ENCODE measurements at regions of chr6 and their contacts with region 1.

Region 1: DNA sequence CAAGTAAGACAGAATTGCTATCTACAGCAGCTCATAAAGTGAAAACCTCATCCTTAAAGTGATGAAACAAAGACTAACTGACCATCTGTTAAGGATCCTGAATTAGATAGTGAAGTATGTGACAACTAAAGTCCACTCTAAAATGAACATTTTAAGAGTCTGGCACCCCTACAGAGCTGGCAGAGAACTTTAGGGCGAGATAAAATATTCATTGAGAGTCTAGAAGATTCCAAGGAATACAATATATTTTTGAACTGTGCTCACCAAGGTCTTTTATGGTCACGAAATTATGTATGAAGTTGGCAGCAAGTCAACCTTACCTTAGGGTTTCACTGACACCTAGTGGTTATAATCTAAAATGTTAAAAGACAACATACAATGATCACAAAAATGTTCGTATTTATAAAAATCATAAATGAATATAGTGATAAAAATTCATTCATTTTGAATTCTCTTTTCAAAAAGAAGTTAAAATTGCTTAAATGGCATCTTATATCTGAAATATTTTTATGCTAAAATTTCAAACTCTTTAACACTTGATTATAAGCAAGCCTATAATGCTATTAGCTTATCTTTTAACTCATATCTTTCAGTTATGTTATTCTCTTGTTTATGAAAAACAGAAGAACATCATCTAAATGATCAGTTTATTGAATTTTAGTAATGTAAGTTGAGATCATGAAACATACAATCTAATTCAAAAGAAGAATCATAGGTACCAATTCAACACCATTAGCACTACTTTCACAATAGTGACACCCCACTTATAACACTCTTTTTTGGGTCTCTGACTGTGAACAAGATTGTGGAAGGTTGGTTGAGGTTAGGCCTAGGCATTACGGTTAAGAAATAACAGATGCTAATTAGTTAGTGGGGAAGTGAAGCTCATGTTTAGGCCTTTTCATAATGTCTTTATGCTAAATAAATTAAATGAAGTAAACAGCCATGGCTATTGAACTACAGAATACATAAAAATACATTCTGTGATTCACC is 27.5 kb downstream of the RSPH3 start:
- DNase-seq: peak in 2 of 9 experiments; percentile 70 to 78
- ATAC-seq: peak; percentile 63
- H3K4me3 ChIP-seq: no peak overlapping the region
- H3K4me3 Mint-ChIP-seq: no peak overlapping the region
- H3K27ac ChIP-seq: no peak overlapping the region
- H3K27ac Mint-ChIP-seq: no peak overlapping the region
- H3K4me1 ChIP-seq: no peaks in the 10 kb centered on the region
- H3K4me1 Mint-ChIP-seq: no peaks in the 10 kb centered on the region
- H3K27me3 ChIP-seq: no peaks in the 10 kb centered on the region
- H3K27me3 Mint-ChIP-seq: no peaks in the 10 kb centered on the region
- CTCF ChIP-seq: peak; percentile 73

Region 2: GRCh38 chr6:158631678-158632537 is 340.6 kb before region 1 on chr6:
- CTCF ChIA-PET with region 1: interaction called, 3 read pairs
- POLR2A ChIA-PET with region 1: no interaction called
- intact Hi-C with region 1: loop called in 1 of 2 experiments (anchors 5 kb)
- DNase-seq: peak in 1 of 9 experiments; percentile 40
- ATAC-seq: no peak
- H3K4me3 ChIP-seq: no peak overlapping the region
- H3K4me3 Mint-ChIP-seq: no peak overlapping the region
- H3K27ac ChIP-seq: peak overlapping the region in 1 of 2 experiments; percentile 40
- H3K27ac Mint-ChIP-seq: peak overlapping the region; percentile 87
- H3K4me1 ChIP-seq: peaks cover 23% of the 10 kb centered on the region
- H3K4me1 Mint-ChIP-seq: peaks cover 55% of the 10 kb centered on the region
- H3K27me3 ChIP-seq: no peaks in the 10 kb centered on the region
- H3K27me3 Mint-ChIP-seq: no peaks in the 10 kb centered on the region
- CTCF ChIP-seq: no peak

Region 3: GRCh38 chr6:158704181-158704822 is 268.2 kb before region 1 on chr6:
- CTCF ChIA-PET with region 1: interaction called, 140 read pairs
- POLR2A ChIA-PET with region 1: interaction called, 4 read pairs
- intact Hi-C with region 1: loop called (anchors 1 kb)
- DNase-seq: peak; percentile 66 to 89 (median 77)
- ATAC-seq: peak; percentile 97
- H3K4me3 ChIP-seq: peak overlapping the region; percentile 45 to 60
- H3K4me3 Mint-ChIP-seq: peak overlapping the region; percentile 81
- H3K27ac ChIP-seq: peak overlapping the region in 1 of 2 experiments; percentile 17
- H3K27ac Mint-ChIP-seq: peak overlapping the region; percentile 79
- H3K4me1 ChIP-seq: peaks cover 8% of the 10 kb centered on the region
- H3K4me1 Mint-ChIP-seq: peaks cover 9% of the 10 kb centered on the region
- H3K27me3 ChIP-seq: no peaks in the 10 kb centered on the region
- H3K27me3 Mint-ChIP-seq: no peaks in the 10 kb centered on the region
- CTCF ChIP-seq: peak; percentile 98

Region 4: GRCh38 chr6:158769771-158770432 is 202.6 kb before region 1 on chr6:
- CTCF ChIA-PET with region 1: interaction called, 16 read pairs
- POLR2A ChIA-PET with region 1: no interaction called
- intact Hi-C with region 1: no loop called
- DNase-seq: peak in 1 of 9 experiments; percentile 35
- ATAC-seq: no peak
- H3K4me3 ChIP-seq: no peak overlapping the region
- H3K4me3 Mint-ChIP-seq: peak overlapping the region; percentile 9
- H3K27ac ChIP-seq: peak overlapping the region in 1 of 2 experiments; percentile 40
- H3K27ac Mint-ChIP-seq: peak overlapping the region; percentile 3
- H3K4me1 ChIP-seq: peaks cover 36% of the 10 kb centered on the region
- H3K4me1 Mint-ChIP-seq: peaks cover 45% of the 10 kb centered on the region
- H3K27me3 ChIP-seq: no peaks in the 10 kb centered on the region
- H3K27me3 Mint-ChIP-seq: no peaks in the 10 kb centered on the region
- CTCF ChIP-seq: no peak

Region 5: GRCh38 chr6:158869826-158870648 is 102.5 kb before region 1 on chr6:
- CTCF ChIA-PET with region 1: interaction called, 3 read pairs
- POLR2A ChIA-PET with region 1: no interaction called
- intact Hi-C with region 1: loop called (anchors 2 to 10 kb)
- DNase-seq: peak in 5 of 9 experiments; percentile 63 to 99 (median 94)
- ATAC-seq: peak; percentile 75
- H3K4me3 ChIP-seq: peak overlapping the region; percentile 57 to 61
- H3K4me3 Mint-ChIP-seq: peak overlapping the region; percentile 89
- H3K27ac ChIP-seq: peak overlapping the region; percentile 86 to 98
- H3K27ac Mint-ChIP-seq: peak overlapping the region; percentile 99
- H3K4me1 ChIP-seq: peaks cover 20% of the 10 kb centered on the region
- H3K4me1 Mint-ChIP-seq: peaks cover 34% of the 10 kb centered on the region
- H3K27me3 ChIP-seq: no peaks in the 10 kb centered on the region
- H3K27me3 Mint-ChIP-seq: no peaks in the 10 kb centered on the region
- CTCF ChIP-seq: no peak

Region 6: DNA sequence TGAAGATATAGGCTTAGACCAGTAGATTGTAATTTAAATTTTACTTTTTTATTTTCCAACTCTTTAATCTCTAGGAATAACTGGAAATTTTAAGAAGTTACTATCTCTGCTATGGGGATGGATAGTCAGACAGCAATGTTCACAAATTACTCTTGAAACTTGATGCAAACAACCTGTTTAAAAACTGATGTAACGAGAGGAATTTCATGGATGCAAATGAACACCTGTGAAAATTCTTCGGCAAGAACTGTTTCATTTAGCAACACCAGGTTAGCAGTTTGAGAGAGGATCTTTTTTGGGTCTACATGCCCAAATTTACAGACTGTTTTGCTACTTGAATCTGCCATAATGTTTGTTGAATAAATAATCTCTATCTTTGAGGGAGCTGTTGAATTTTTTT is 47.5 kb after region 1 on chr6:
- CTCF ChIA-PET with region 1: no interaction called
- POLR2A ChIA-PET with region 1: no interaction called
- intact Hi-C with region 1: no loop called
- DNase-seq: no peak
- ATAC-seq: no peak
- H3K4me3 ChIP-seq: no peak overlapping the region
- H3K4me3 Mint-ChIP-seq: no peak overlapping the region
- H3K27ac ChIP-seq: no peak overlapping the region
- H3K27ac Mint-ChIP-seq: no peak overlapping the region
- H3K4me1 ChIP-seq: peaks cover 19% of the 10 kb centered on the region
- H3K4me1 Mint-ChIP-seq: peaks cover 27% of the 10 kb centered on the region
- H3K27me3 ChIP-seq: no peaks in the 10 kb centered on the region
- H3K27me3 Mint-ChIP-seq: no peaks in the 10 kb centered on the region
- CTCF ChIP-seq: no peak

Region 7: DNA sequence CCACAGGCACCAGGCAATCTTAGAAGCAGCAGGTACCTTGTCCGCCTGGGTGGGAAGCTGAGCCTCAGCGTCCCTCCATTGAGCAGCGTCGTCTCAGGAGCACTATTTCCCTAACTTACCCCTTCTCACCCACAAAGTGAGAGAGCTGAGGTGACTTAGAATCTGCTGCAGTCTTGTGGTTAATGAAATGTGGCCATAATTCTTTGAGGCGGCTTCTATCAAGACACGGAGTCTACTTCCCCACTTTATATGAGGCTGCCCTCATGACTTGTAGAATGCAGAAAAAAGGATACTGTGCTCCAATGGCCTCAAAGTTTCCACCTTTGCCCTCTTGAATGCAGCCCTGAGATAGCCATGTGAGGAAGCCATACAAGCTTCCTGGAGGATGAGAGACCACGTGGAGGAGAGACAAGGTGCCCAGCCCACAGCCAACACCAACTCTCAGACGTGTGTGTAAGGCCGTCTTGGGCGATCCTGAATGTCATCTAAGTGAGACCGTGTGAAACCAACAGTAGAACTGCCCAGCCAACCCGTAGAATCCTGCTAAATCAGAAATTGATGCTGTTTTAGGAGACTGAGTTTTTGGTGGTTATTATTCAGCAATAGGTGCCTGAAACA is 81.4 kb after region 1 on chr6:
- CTCF ChIA-PET with region 1: no interaction called
- POLR2A ChIA-PET with region 1: no interaction called
- intact Hi-C with region 1: no loop called
- DNase-seq: peak in 2 of 9 experiments; percentile 73 to 85
- ATAC-seq: peak; percentile 67
- H3K4me3 ChIP-seq: no peak overlapping the region
- H3K4me3 Mint-ChIP-seq: peak overlapping the region; percentile 8
- H3K27ac ChIP-seq: peak overlapping the region in 1 of 2 experiments; percentile 24
- H3K27ac Mint-ChIP-seq: peak overlapping the region; percentile 80
- H3K4me1 ChIP-seq: peaks cover 39% of the 10 kb centered on the region
- H3K4me1 Mint-ChIP-seq: peaks cover 52% of the 10 kb centered on the region
- H3K27me3 ChIP-seq: no peaks in the 10 kb centered on the region
- H3K27me3 Mint-ChIP-seq: no peaks in the 10 kb centered on the region
- CTCF ChIP-seq: no peak

Region 8: GRCh38 chr6:159134701-159135364 is 162.3 kb after region 1 on chr6:
- CTCF ChIA-PET with region 1: interaction called, 11 read pairs
- POLR2A ChIA-PET with region 1: no interaction called
- intact Hi-C with region 1: no loop called
- DNase-seq: peak; percentile 63 to 86 (median 78)
- ATAC-seq: peak; percentile 96
- H3K4me3 ChIP-seq: no peak overlapping the region
- H3K4me3 Mint-ChIP-seq: no peak overlapping the region
- H3K27ac ChIP-seq: no peak overlapping the region
- H3K27ac Mint-ChIP-seq: no peak overlapping the region
- H3K4me1 ChIP-seq: no peaks in the 10 kb centered on the region
- H3K4me1 Mint-ChIP-seq: no peaks in the 10 kb centered on the region
- H3K27me3 ChIP-seq: no peaks in the 10 kb centered on the region
- H3K27me3 Mint-ChIP-seq: no peaks in the 10 kb centered on the region
- CTCF ChIP-seq: peak; percentile 96

Region 9: GRCh38 chr6:159324596-159324995 is 352.1 kb after region 1 on chr6:
- CTCF ChIA-PET with region 1: no interaction called
- POLR2A ChIA-PET with region 1: no interaction called
- intact Hi-C with region 1: no loop called
- DNase-seq: no peak
- ATAC-seq: no peak
- H3K4me3 ChIP-seq: no peak overlapping the region
- H3K4me3 Mint-ChIP-seq: no peak overlapping the region
- H3K27ac ChIP-seq: no peak overlapping the region
- H3K27ac Mint-ChIP-seq: no peak overlapping the region
- H3K4me1 ChIP-seq: no peaks in the 10 kb centered on the region
- H3K4me1 Mint-ChIP-seq: no peaks in the 10 kb centered on the region
- H3K27me3 ChIP-seq: no peaks in the 10 kb centered on the region
- H3K27me3 Mint-ChIP-seq: peaks cover 14% of the 10 kb centered on the region
- CTCF ChIP-seq: no peak

Measured in CD8-positive, alpha-beta T cell (primary cell).